AG04450 (cell line): ENCODE measurements at regions of chr2 and their contacts with region 1.

Region 1: DNA sequence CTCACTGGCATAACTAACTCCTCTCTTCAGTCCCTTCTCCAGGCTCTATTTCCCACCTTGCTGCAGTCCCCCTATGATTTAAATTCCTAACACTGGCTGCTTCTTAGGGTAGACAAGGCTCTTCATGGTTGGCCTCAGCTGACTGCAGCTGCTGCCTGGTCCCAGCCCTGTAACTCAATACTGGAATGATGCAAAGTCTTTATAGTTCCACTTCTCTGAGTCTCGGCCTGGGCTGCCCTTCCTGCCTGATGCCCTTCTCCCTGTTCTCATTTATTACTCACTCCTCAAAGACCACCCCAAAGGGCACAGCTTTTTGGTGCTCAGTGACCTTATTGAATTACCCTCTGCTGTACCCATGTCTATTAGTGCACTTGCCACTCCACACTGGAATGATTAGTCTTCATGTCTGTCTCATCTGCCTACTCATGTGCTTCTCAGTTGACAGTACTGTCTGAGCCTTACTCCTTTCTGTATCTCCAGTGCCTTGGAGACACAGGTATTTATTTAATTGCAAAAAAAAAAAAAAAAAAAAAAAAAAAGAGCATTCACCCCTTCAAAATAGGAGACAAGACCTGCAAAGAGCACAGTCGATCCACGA is 199.4 kb upstream of the REV1 start:
- DNase-seq: no peak
- H3K4me3 ChIP-seq: no peak overlapping the region
- H3K27ac ChIP-seq: no peak overlapping the region
- H3K27me3 ChIP-seq: no peaks in the 10 kb centered on the region
- CTCF ChIP-seq: no peak

Region 2: DNA sequence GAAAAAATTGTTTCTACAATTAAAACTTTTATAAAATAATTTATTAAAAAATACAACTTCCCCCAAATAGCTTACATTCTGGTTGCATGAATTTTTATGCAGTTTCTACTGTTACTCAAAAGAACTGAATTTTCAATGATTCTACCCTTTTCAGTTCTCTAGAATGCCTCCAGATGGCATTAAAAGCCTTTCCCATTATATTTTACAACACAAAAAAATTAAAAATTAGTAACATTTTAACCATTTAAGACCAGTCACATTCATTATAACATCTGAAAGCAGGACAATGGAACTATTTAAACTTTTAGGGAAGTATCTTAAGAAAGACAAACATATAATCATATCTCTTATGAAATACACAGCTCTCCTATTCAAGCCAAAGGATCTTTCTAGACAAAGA is 36.6 kb after region 1 on chr2:
- CTCF ChIA-PET with region 1: no interaction called
- POLR2A ChIA-PET with region 1: interaction called, 10 read pairs
- DNase-seq: no peak
- H3K4me3 ChIP-seq: no peak overlapping the region
- H3K27ac ChIP-seq: no peak overlapping the region
- H3K27me3 ChIP-seq: no peaks in the 10 kb centered on the region
- CTCF ChIP-seq: peak; percentile 60